ENCODE measurements at regions of chr1 and their contacts with region 1.

Region 1: GRCh38 chr1:161486806-161487741 is 18.2 kb upstream of the FCGR2A start:
- H3K4me3 Mint-ChIP-seq: no peak overlapping the region
- H3K27ac Mint-ChIP-seq: no peak overlapping the region
- H3K4me1 Mint-ChIP-seq: peaks cover 40% of the 10 kb centered on the region
- H3K27me3 Mint-ChIP-seq: peaks cover 34% of the 10 kb centered on the region

Region 2: GRCh38 chr1:161531986-161532643 is 45.0 kb after region 1 on chr1:
- intact Hi-C with region 1: loop called (anchors 10 kb)
- H3K4me3 Mint-ChIP-seq: peak overlapping the region; percentile 14
- H3K27ac Mint-ChIP-seq: peak overlapping the region; percentile 92
- H3K4me1 Mint-ChIP-seq: peaks cover 31% of the 10 kb centered on the region
- H3K27me3 Mint-ChIP-seq: no peaks in the 10 kb centered on the region

Region 3: GRCh38 chr1:161749509-161750407 is 262.7 kb after region 1 on chr1 and contains the start of gene DUSP12:
- intact Hi-C with region 1: loop called (anchors 10 kb)
- H3K4me3 Mint-ChIP-seq: peak within 1 kb of the TSS; percentile 99
- H3K27ac Mint-ChIP-seq: peak within 1 kb of the TSS; percentile 93
- H3K4me1 Mint-ChIP-seq: peaks cover 40% of the 10 kb centered on the region
- H3K27me3 Mint-ChIP-seq: peaks cover 16% of the 10 kb centered on the region

Measured in dendritic cell treated with granulocyte-macrophage colony-stimulating factor and Interleukin-4, amounts not matched to agents 40 ng/mL and 50 ng/mL, for 4 days (primary cell).